MCF 10A (cell line): ENCODE measurements at regions of chr11 and their contacts with region 1.

Region 1: DNA sequence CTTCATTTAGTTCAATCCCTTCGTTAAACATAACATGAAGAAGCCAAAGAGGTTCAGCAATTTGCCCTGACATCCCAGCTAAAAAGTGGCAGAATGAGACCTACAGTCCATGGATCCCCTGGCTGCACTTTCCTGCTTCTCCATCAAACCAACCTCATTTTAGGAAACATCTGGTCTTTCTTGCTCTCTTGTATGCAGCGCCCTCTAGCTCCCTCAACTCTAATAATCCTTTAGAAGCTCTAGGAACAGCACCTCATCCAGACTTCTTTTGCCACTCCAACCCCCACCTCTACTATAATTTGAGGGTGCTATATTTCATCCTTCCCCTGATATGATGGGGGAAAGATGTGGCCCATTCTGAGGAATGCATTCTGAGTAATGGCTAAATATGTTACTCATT is 7.4 kb downstream of the CNTF start:
- DNase-seq: peak; percentile 61
- H3K4me3 Mint-ChIP-seq: no peak overlapping the region
- H3K27ac Mint-ChIP-seq: no peak overlapping the region
- H3K4me1 Mint-ChIP-seq: peaks cover 28% of the 10 kb centered on the region
- H3K27me3 Mint-ChIP-seq: no peaks in the 10 kb centered on the region
- CTCF ChIP-seq: peak; percentile 51

Region 2: GRCh38 chr11:58345204-58345603 is 284.7 kb before region 1 on chr11:
- CTCF ChIA-PET with region 1: no interaction called
- POLR2A ChIA-PET with region 1: no interaction called
- intact Hi-C with region 1: no loop called
- DNase-seq: no peak
- H3K4me3 Mint-ChIP-seq: no peak overlapping the region
- H3K27ac Mint-ChIP-seq: no peak overlapping the region
- H3K4me1 Mint-ChIP-seq: no peaks in the 10 kb centered on the region
- H3K27me3 Mint-ChIP-seq: no peaks in the 10 kb centered on the region
- CTCF ChIP-seq: no peak

Region 3: DNA sequence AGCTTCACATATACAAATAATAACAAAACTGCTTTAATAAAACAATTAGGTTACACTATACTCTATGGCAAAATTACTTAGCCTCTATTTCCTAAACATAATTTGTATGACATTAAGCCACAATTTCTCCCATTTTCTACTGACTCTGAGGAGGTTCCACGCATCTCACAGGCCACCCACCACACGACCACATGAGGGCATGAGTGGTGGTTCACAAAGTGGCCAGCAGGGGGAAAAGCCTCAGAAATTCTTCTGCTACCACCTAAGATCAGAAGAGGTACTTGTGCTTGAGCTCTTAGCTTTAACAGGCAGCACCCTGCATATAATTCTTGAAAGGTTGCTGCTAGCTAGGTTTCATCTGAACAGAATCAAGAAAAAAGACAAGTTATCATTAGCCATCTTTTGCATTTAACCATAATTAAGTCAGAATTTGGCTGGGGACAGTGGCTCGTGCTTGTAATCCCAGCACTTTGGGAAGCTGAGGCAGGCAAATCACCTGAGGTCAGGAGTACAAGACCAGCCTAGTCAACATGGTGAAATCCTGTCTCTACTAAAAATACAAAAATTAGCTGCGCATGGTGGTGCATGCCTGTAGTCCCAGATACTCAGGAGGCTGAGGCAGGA is 61.9 kb before region 1 on chr11:
- CTCF ChIA-PET with region 1: interaction called, 12 read pairs
- POLR2A ChIA-PET with region 1: interaction called, 89 read pairs
- intact Hi-C with region 1: no loop called
- DNase-seq: peak; percentile 70
- H3K4me3 Mint-ChIP-seq: no peak overlapping the region
- H3K27ac Mint-ChIP-seq: no peak overlapping the region
- H3K4me1 Mint-ChIP-seq: peaks cover 9% of the 10 kb centered on the region
- H3K27me3 Mint-ChIP-seq: no peaks in the 10 kb centered on the region
- CTCF ChIP-seq: peak; percentile 65

Region 4: GRCh38 chr11:58597486-58598144 is 32.2 kb before region 1 on chr11:
- CTCF ChIA-PET with region 1: interaction called, 10 read pairs
- POLR2A ChIA-PET with region 1: interaction called, 15 read pairs
- intact Hi-C with region 1: no loop called
- DNase-seq: no peak
- H3K4me3 Mint-ChIP-seq: no peak overlapping the region
- H3K27ac Mint-ChIP-seq: no peak overlapping the region
- H3K4me1 Mint-ChIP-seq: peaks cover 30% of the 10 kb centered on the region
- H3K27me3 Mint-ChIP-seq: no peaks in the 10 kb centered on the region
- CTCF ChIP-seq: no peak

Region 5: GRCh38 chr11:58640386-58641023 is 10.6 kb after region 1 on chr11:
- CTCF ChIA-PET with region 1: interaction called, 18 read pairs
- POLR2A ChIA-PET with region 1: interaction called, 5 read pairs
- intact Hi-C with region 1: no loop called
- DNase-seq: no peak
- H3K4me3 Mint-ChIP-seq: no peak overlapping the region
- H3K27ac Mint-ChIP-seq: no peak overlapping the region
- H3K4me1 Mint-ChIP-seq: no peaks in the 10 kb centered on the region
- H3K27me3 Mint-ChIP-seq: no peaks in the 10 kb centered on the region
- CTCF ChIP-seq: no peak

Region 6: GRCh38 chr11:58647141-58647699 is 17.4 kb after region 1 on chr11:
- CTCF ChIA-PET with region 1: interaction called, 18 read pairs
- POLR2A ChIA-PET with region 1: interaction called, 4 read pairs
- intact Hi-C with region 1: no loop called
- DNase-seq: no peak
- H3K4me3 Mint-ChIP-seq: no peak overlapping the region
- H3K27ac Mint-ChIP-seq: no peak overlapping the region
- H3K4me1 Mint-ChIP-seq: no peaks in the 10 kb centered on the region
- H3K27me3 Mint-ChIP-seq: no peaks in the 10 kb centered on the region
- CTCF ChIP-seq: no peak

Region 7: DNA sequence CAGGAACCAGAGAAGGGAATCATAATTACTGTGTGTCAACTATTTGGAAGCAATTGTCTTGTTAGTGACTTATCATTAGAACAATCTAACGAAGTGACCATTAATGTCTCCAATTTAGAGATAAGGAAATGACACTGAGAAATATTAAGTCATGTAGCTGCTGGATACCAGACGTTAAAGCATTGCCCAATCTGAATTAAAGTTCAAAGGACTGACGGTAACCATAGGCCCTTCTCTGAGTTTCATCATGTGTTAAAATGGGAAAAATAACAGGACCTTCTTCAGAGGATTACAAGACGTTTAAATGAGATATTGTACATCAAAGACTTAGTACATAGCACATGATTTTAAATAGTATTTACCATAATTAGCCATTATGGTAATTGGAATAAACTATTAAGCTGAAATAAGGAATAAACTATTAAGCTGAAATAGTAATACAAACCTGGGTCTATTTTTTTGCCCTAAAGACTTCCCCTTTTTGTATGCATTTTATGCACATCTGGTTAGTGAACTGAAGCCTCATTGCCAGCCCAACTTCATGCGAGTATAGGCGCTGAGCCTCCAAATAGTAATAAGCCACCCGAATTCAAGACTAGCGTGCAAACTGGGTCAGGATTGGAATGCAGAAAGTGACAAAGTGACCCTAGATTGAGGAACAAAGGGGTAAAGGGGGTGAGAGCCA is 350.4 kb after region 1 on chr11:
- CTCF ChIA-PET with region 1: no interaction called
- POLR2A ChIA-PET with region 1: no interaction called
- intact Hi-C with region 1: no loop called
- DNase-seq: no peak
- H3K4me3 Mint-ChIP-seq: no peak overlapping the region
- H3K27ac Mint-ChIP-seq: no peak overlapping the region
- H3K4me1 Mint-ChIP-seq: no peaks in the 10 kb centered on the region
- H3K27me3 Mint-ChIP-seq: no peaks in the 10 kb centered on the region
- CTCF ChIP-seq: no peak